ENCODE measurements at regions of chr3 and their contacts with region 1.

Region 1: DNA sequence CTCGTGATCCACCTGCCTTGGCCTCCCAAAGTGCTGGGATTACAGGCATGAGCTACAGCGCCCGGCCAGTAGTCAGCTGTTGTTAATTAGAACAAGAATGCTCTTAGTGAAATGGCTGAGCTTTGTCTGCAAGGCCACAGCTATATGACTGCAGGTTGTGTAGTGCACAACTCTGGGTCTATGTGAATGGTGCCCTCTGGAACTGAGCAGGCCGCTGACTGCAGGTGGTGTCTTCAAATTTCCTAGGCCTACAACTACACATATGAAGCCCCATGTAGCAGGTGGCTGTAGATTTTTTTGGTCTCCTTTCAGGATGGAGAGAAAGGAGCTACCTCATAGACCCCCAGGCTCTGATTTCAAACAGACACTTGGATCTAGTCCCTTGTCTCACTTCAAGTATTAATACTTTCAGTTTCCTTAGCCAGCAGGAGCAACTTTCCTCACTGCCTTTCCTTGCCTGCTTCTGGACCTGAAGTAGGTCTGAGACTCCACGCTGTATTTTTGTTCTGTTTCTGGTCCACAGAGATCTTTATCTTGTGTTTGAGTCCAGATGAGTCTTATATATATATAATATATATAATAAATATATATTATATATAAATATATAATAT is 86.9 kb downstream of the C3orf80 start:
- DNase-seq: no peak
- ATAC-seq: no peak
- H3K4me3 ChIP-seq: no peak overlapping the region
- H3K4me3 Mint-ChIP-seq: no peak overlapping the region
- H3K27ac ChIP-seq: no peak overlapping the region
- H3K27ac Mint-ChIP-seq: no peak overlapping the region
- H3K4me1 ChIP-seq: no peaks in the 10 kb centered on the region
- H3K4me1 Mint-ChIP-seq: no peaks in the 10 kb centered on the region
- H3K27me3 ChIP-seq: no peaks in the 10 kb centered on the region
- H3K27me3 Mint-ChIP-seq: no peaks in the 10 kb centered on the region

Region 2: GRCh38 chr3:160331127-160331937 is 19.2 kb after region 1 on chr3:
- CTCF ChIA-PET with region 1: no interaction called
- POLR2A ChIA-PET with region 1: interaction called in 1 of 2 experiments, 15 read pairs
- DNase-seq: no peak
- ATAC-seq: no peak
- H3K4me3 ChIP-seq: no peak overlapping the region
- H3K4me3 Mint-ChIP-seq: no peak overlapping the region
- H3K27ac ChIP-seq: no peak overlapping the region
- H3K27ac Mint-ChIP-seq: no peak overlapping the region
- H3K4me1 ChIP-seq: no peaks in the 10 kb centered on the region
- H3K4me1 Mint-ChIP-seq: no peaks in the 10 kb centered on the region
- H3K27me3 ChIP-seq: no peaks in the 10 kb centered on the region
- H3K27me3 Mint-ChIP-seq: no peaks in the 10 kb centered on the region